ENCODE measurements at regions of chr21 and their contacts with region 1.

Region 1: DNA sequence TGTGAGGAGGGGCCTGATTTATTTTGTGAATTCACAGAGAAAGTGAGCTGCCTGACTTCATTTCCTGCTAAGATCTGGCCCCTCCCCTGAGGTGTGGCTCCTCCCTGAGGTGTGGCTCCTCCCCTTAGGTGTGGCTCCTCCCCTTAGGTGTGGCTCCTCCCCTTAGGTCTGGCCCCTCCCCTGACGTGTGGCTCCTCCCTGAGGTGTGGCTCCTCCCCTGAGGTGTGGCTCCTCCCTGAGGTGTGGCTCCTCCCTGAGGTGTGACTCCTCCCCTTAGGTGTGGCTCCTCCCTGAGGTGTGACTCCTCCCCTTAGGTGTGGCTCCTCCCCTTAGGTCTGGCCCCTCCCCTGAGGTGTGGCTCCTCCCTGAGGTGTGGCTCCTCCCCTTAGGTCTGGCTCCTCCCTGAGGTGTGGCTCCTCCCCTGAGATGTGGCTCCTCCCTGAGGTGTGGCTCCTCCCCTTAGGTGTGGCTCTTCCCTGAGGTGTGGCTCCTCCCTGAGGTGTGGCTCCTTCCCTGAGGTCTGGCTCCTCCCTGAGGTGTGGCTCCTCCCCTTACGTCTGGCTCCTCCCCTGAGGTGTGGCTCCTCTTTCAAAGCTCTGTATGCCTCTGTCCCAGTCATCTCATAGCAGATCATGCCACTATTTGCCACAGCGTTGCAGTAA is 26.9 kb upstream of the LRRC3 start:
- DNase-seq: peak; percentile 72
- ATAC-seq: peak; percentile 49
- H3K4me3 ChIP-seq: no peak overlapping the region
- H3K4me3 Mint-ChIP-seq: no peak overlapping the region
- H3K27ac ChIP-seq: peak overlapping the region in 1 of 2 donors; percentile 33
- H3K27ac Mint-ChIP-seq: peak overlapping the region; percentile 10
- H3K4me1 ChIP-seq: peaks cover 0 to 14% of the 10 kb centered on the region in 2 donors
- H3K4me1 Mint-ChIP-seq: peaks cover 2% of the 10 kb centered on the region
- H3K27me3 ChIP-seq: no peaks in the 10 kb centered on the region
- H3K27me3 Mint-ChIP-seq: no peaks in the 10 kb centered on the region
- CTCF ChIP-seq: no peak

Region 2: GRCh38 chr21:44454747-44455523 is 26.5 kb after region 1 on chr21 and contains the start of gene LRRC3:
- CTCF ChIA-PET with region 1: no interaction called
- POLR2A ChIA-PET with region 1: no interaction called
- intact Hi-C with region 1: loop called (anchors 2 kb)
- DNase-seq: peak; percentile 90
- ATAC-seq: peak; percentile 86
- H3K4me3 ChIP-seq: peak within 1 kb of the TSS; percentile 45 to 76 (median 61)
- H3K4me3 Mint-ChIP-seq: peak within 1 kb of the TSS; percentile 85
- H3K27ac ChIP-seq: no peak within 1 kb of the TSS
- H3K27ac Mint-ChIP-seq: peak within 1 kb of the TSS; percentile 46
- H3K4me1 ChIP-seq: peaks cover 10 to 16% of the 10 kb centered on the region in 2 donors
- H3K4me1 Mint-ChIP-seq: peaks cover 7% of the 10 kb centered on the region
- H3K27me3 ChIP-seq: no peaks in the 10 kb centered on the region
- H3K27me3 Mint-ChIP-seq: peaks cover 7% of the 10 kb centered on the region
- CTCF ChIP-seq: no peak
- total RNA-seq, gene LRRC3: 3.3 and 3.8 TPM in 2 replicates

Region 3: GRCh38 chr21:44556879-44557278 is 128.5 kb after region 1 on chr21:
- CTCF ChIA-PET with region 1: no interaction called
- POLR2A ChIA-PET with region 1: no interaction called
- intact Hi-C with region 1: no loop called
- DNase-seq: peak; percentile 43
- ATAC-seq: peak; percentile 39
- H3K4me3 ChIP-seq: no peak overlapping the region
- H3K4me3 Mint-ChIP-seq: peak overlapping the region; percentile 10
- H3K27ac ChIP-seq: no peak overlapping the region
- H3K27ac Mint-ChIP-seq: no peak overlapping the region
- H3K4me1 ChIP-seq: peaks cover 0 to 11% of the 10 kb centered on the region in 2 donors
- H3K4me1 Mint-ChIP-seq: peaks cover 20% of the 10 kb centered on the region
- H3K27me3 ChIP-seq: peaks cover 0 to 13% (median 4%) of the 10 kb centered on the region in 4 experiments
- H3K27me3 Mint-ChIP-seq: peaks cover 48% of the 10 kb centered on the region
- CTCF ChIP-seq: no peak